ENCODE measurements at regions of chr1 and their contacts with region 1.

Region 1: GRCh38 chr1:207404849-207405525 is 49.1 kb upstream of the CR2 start:
- DNase-seq: no peak
- H3K4me3 ChIP-seq: no peak overlapping the region
- H3K27ac ChIP-seq: no peak overlapping the region
- H3K4me1 ChIP-seq: no peaks in the 10 kb centered on the region; a peak in 1 of 7 replicates
- H3K27me3 ChIP-seq: no peaks in the 10 kb centered on the region
- CTCF ChIP-seq: peak in 2 of 3 experiments; percentile 50 to 69; a peak in 3 of 4 replicates
- EP300 ChIP-seq: no peak
- POLR2A ChIP-seq: no peak
- RAD21 ChIP-seq: peak; percentile 78

Region 2: GRCh38 chr1:206941858-206942387 is 463.1 kb before region 1 on chr1:
- CTCF ChIA-PET with region 1: no interaction called
- POLR2A ChIA-PET with region 1: no interaction called
- DNase-seq: no peak
- H3K4me3 ChIP-seq: no peak overlapping the region
- H3K27ac ChIP-seq: no peak overlapping the region
- H3K4me1 ChIP-seq: no peaks in the 10 kb centered on the region; a peak in 1 of 7 replicates
- H3K27me3 ChIP-seq: no peaks in the 10 kb centered on the region
- CTCF ChIP-seq: no peak
- EP300 ChIP-seq: no peak
- POLR2A ChIP-seq: no peak
- RAD21 ChIP-seq: no peak

Region 3: GRCh38 chr1:207077470-207078377 is 327.3 kb before region 1 on chr1:
- CTCF ChIA-PET with region 1: interaction called, 30 read pairs
- POLR2A ChIA-PET with region 1: no interaction called
- DNase-seq: peak in 1 of 2 experiments; percentile 69
- H3K4me3 ChIP-seq: no peak overlapping the region
- H3K27ac ChIP-seq: no peak overlapping the region
- H3K4me1 ChIP-seq: no peaks in the 10 kb centered on the region
- H3K27me3 ChIP-seq: no peaks in the 10 kb centered on the region
- CTCF ChIP-seq: peak; percentile 4 to 87 (median 77)
- EP300 ChIP-seq: no peak
- POLR2A ChIP-seq: no peak
- RAD21 ChIP-seq: peak; percentile 86 to 89

Region 4: GRCh38 chr1:207084701-207085180 is 320.2 kb before region 1 on chr1:
- CTCF ChIA-PET with region 1: interaction called, 30 read pairs
- POLR2A ChIA-PET with region 1: no interaction called
- DNase-seq: peak; percentile 27 to 57
- H3K4me3 ChIP-seq: no peak overlapping the region
- H3K27ac ChIP-seq: no peak overlapping the region
- H3K4me1 ChIP-seq: peaks cover 0 to 3% (median 0%) of the 10 kb centered on the region in 4 experiments; a peak in 2 of 7 replicates
- H3K27me3 ChIP-seq: no peaks in the 10 kb centered on the region
- CTCF ChIP-seq: peak; percentile 39 to 72 (median 71)
- EP300 ChIP-seq: no peak
- POLR2A ChIP-seq: no peak
- RAD21 ChIP-seq: peak; percentile 71 to 74

Region 5: DNA sequence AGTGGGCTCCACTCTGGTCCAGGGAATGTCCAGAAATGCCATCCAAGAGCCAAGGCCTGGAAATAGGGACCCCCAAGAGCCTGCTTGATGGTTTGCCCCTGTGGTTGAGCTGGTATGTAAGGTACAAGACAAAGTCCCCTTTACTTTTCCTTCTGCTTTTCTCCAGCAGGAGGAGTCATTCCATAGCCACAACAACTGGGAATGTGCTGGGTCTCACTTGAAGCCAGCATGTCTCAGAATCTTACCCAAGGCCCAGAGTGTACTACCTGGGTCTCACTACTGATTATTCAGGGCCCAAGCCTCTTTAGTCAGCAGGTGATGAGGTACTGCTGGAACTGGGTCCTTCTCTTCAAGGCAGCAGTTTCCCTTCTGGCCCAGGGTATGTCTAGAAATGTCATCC is 145.6 kb before region 1 on chr1:
- CTCF ChIA-PET with region 1: interaction called, 39 read pairs
- POLR2A ChIA-PET with region 1: no interaction called
- DNase-seq: no peak
- H3K4me3 ChIP-seq: no peak overlapping the region
- H3K27ac ChIP-seq: no peak overlapping the region
- H3K4me1 ChIP-seq: no peaks in the 10 kb centered on the region
- H3K27me3 ChIP-seq: no peaks in the 10 kb centered on the region
- CTCF ChIP-seq: peak; percentile 5 to 70 (median 68)
- EP300 ChIP-seq: 0 out of 3 replicates have a peak, but pooled peaks of 1 of the 2 experiments have one; percentile 8
- POLR2A ChIP-seq: no peak
- RAD21 ChIP-seq: peak; percentile 77 to 78

Region 6: DNA sequence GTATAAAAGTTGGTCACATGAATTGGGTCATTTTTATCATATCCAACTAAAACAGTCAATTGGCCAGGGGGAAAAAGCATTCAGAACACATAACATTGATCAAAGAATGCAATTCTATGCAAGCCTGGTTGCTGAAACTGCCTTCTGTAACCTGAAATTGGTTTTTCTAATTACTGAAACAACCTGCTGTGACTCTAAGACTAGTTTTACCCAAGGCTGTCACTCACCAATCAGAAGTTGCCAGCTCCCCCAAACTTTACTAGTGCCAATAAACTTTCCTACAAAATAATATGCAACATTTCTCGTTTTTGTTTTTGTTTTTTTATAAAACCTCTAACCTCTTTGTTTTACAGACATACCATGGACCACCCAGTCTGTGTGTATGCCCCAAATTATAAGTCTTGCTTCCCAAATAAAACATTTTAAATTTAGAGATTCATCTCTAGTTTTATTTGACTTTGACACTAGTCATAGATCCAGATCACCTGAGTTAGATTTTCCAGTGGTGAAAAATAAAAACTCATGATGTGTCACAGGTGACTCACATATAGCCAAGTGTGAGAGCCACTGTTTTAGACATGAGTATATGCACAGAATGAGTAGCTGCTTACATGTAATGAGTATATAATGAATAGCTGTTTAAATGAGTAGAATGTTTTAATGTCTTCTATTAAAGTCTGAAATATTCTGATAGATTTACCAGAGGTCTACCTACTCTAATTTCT is 15.1 kb before region 1 on chr1:
- CTCF ChIA-PET with region 1: interaction called, 11 read pairs
- POLR2A ChIA-PET with region 1: no interaction called
- DNase-seq: no peak
- H3K4me3 ChIP-seq: no peak overlapping the region
- H3K27ac ChIP-seq: no peak overlapping the region
- H3K4me1 ChIP-seq: no peaks in the 10 kb centered on the region
- H3K27me3 ChIP-seq: no peaks in the 10 kb centered on the region
- CTCF ChIP-seq: no peak
- EP300 ChIP-seq: no peak
- POLR2A ChIP-seq: no peak
- RAD21 ChIP-seq: no peak

Region 7: DNA sequence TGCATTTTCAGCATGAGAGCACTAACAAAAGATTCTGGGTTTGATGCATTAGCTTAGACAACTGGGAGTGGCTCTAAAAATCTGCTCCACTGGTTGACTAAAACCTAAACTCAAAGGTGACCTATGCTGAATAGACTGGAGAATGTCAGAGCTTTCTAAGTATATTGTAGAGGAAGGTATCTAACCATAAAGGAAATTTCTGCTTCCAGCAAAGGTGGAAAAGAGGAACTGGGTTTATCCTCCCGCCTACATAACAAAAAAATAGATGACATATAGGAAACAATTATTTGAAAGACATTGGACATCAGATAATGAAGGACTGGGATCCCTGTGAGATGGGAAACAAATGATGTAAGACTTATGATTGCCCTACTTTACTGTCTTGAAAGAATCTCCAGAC is 13.4 kb after region 1 on chr1:
- CTCF ChIA-PET with region 1: interaction called, 14 read pairs
- POLR2A ChIA-PET with region 1: interaction called, 4 read pairs
- DNase-seq: no peak
- H3K4me3 ChIP-seq: no peak overlapping the region
- H3K27ac ChIP-seq: no peak overlapping the region
- H3K4me1 ChIP-seq: no peaks in the 10 kb centered on the region
- H3K27me3 ChIP-seq: no peaks in the 10 kb centered on the region
- CTCF ChIP-seq: no peak
- EP300 ChIP-seq: no peak
- POLR2A ChIP-seq: no peak
- RAD21 ChIP-seq: no peak

Region 8: GRCh38 chr1:207499573-207499972 is 94.6 kb after region 1 on chr1:
- CTCF ChIA-PET with region 1: interaction called, 14 read pairs
- POLR2A ChIA-PET with region 1: interaction called, 5 read pairs
- DNase-seq: peak in 1 of 2 experiments; percentile 56
- H3K4me3 ChIP-seq: no peak overlapping the region
- H3K27ac ChIP-seq: no peak overlapping the region
- H3K4me1 ChIP-seq: peaks cover 0 to 6% (median 3%) of the 10 kb centered on the region in 4 experiments; a peak in 5 of 7 replicates
- H3K27me3 ChIP-seq: peaks cover 4 to 23% (median 19%) of the 10 kb centered on the region in 4 experiments; a peak in 6 of 7 replicates
- CTCF ChIP-seq: peak in 2 of 3 experiments; percentile 79; a peak in 3 of 4 replicates
- EP300 ChIP-seq: no peak
- POLR2A ChIP-seq: no peak
- RAD21 ChIP-seq: peak; percentile 96 to 97

Measured in H1 (cell line).